Caco-2 (cell line): ENCODE measurements at regions of chr3 and their contacts with region 1.

Region 1: GRCh38 chr3:10804183-10804648 is 11.8 kb upstream of the SLC6A11 start:
- DNase-seq: peak; percentile 76 to 79
- H3K4me3 ChIP-seq: no peak overlapping the region
- H3K4me3 Mint-ChIP-seq: no peak overlapping the region
- H3K27ac Mint-ChIP-seq: peak overlapping the region; percentile 63
- H3K4me1 ChIP-seq: peaks cover 20% of the 10 kb centered on the region
- H3K4me1 Mint-ChIP-seq: peaks cover 12% of the 10 kb centered on the region
- H3K27me3 ChIP-seq: no peaks in the 10 kb centered on the region
- H3K27me3 Mint-ChIP-seq: no peaks in the 10 kb centered on the region
- CTCF ChIP-seq: no peak

Region 2: DNA sequence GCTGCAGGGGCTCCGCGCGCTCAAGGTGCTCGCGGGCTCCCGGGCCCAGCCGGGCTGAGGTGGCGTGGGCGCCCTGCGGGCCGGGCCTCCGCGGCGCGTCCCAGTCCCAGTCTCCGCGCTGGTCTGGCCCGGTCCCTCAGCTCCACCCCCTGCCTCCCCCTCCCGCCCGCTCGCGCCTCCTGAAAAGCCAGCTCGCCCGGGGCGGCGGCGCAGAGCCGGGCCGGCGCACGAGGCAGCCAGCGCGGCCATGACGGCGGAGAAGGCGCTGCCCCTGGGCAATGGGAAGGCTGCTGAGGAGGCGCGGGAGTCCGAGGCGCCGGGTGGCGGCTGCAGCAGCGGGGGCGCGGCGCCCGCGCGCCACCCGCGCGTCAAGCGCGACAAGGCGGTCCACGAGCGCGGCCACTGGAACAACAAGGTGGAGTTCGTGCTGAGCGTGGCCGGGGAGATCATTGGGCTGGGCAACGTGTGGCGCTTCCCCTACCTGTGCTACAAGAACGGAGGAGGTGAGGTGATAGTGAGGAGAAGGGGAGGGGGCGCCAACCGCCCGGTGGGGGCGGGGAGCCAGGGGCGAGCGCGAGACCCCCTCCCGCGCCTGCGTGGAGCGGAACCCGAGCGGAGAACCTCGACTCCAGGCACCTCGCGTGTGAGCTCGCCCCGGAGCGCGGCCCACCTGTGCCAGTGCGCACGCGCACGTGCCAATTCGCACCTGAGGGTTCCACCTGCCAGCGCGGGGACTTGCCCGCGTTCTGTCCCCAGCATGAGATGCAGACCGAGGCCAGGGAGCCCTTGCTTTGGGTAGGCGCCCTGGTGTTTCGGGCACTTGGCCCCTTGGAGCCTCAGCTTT is 12.0 kb after region 1 on chr3 and contains the start of gene SLC6A11:
- CTCF ChIA-PET with region 1: no interaction called
- POLR2A ChIA-PET with region 1: no interaction called
- intact Hi-C with region 1: loop called (anchors 1 kb)
- DNase-seq: no peak
- H3K4me3 ChIP-seq: no peak within 1 kb of the TSS
- H3K4me3 Mint-ChIP-seq: no peak within 1 kb of the TSS
- H3K27ac Mint-ChIP-seq: no peak within 1 kb of the TSS
- H3K4me1 ChIP-seq: peaks cover 13% of the 10 kb centered on the region
- H3K4me1 Mint-ChIP-seq: peaks cover 7% of the 10 kb centered on the region
- H3K27me3 ChIP-seq: no peaks in the 10 kb centered on the region
- H3K27me3 Mint-ChIP-seq: no peaks in the 10 kb centered on the region
- CTCF ChIP-seq: no peak
- total RNA-seq, gene SLC6A11: not detected in 2 replicates